Activated T-helper 1 cell treated with anti-CD3 and anti-CD28 coated beads, Interleukin-12 subunit alpha, Interleukin-12 subunit beta, Interleukin-2, Interleukin-4 antibody, amounts not matched to agents 30 ng/mL and 10 ng/mL and 1 ng/mL, durations not matched to agents 14 hours and 24 hours and 36 hours (primary cell): ENCODE measurements at regions of chr16 and their contacts with region 1.

Region 1: DNA sequence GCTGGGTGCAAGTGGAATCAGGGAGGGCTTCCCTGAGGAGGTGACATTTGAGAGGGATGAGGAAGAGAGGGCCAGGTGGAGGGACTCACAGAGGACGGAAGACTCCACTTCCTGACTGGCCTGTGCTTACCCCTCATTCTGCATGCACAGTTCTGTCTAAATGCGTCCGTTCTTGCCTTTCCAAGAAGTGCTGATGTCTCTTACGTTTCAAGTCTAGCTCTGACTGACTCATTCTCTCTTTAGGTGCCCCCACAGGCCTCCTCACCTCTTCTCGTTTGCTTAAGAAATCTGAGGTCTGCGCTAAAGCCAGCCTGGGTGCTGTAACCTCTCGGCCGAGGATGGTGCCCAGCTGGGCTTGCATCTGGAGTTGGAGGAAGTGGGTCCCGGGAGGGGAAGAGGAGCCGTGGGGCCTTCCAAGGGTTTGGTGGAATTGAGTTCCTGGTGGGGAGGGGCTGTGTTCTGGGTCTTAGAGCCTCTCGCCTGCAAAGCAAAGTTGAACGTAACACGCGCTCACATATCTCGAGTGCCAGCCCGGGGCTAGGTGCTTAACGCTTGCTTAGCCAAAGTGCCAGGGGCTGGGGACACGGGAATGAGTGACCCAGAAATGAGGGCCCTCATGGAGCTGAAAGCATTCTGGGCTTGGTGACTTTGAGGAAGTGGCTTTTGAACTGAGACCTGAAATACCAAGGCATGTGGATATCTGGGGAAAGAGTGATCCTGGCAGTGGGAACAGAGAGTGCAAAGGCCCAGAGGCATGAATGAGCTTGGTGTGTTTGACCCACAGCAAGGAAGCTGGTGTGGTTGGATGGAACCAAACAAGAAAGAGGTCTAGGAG is 4.8 kb downstream of the IL4R start:
- DNase-seq: peak; percentile 58
- H3K4me3 Mint-ChIP-seq: peak overlapping the region; percentile 94
- H3K27ac Mint-ChIP-seq: peak overlapping the region; percentile 99
- H3K4me1 Mint-ChIP-seq: peaks cover 71% of the 10 kb centered on the region
- H3K27me3 Mint-ChIP-seq: no peaks in the 10 kb centered on the region

Region 2: GRCh38 chr16:27203429-27204231 is 115.0 kb before region 1 on chr16 and contains the start of gene KDM8:
- intact Hi-C with region 1: loop called (anchors 1 kb)
- DNase-seq: peak; percentile 100
- H3K4me3 Mint-ChIP-seq: peak within 1 kb of the TSS; percentile 97
- H3K27ac Mint-ChIP-seq: peak within 1 kb of the TSS; percentile 99
- H3K4me1 Mint-ChIP-seq: peaks cover 53% of the 10 kb centered on the region
- H3K27me3 Mint-ChIP-seq: no peaks in the 10 kb centered on the region
- total RNA-seq, gene KDM8: 12.5 and 14.5 TPM in 2 replicates

Region 3: GRCh38 chr16:27286451-27286850 is 32.2 kb before region 1 on chr16:
- intact Hi-C with region 1: loop called (anchors 1 kb)
- DNase-seq: no peak
- H3K4me3 Mint-ChIP-seq: no peak overlapping the region
- H3K27ac Mint-ChIP-seq: no peak overlapping the region
- H3K4me1 Mint-ChIP-seq: peaks cover 72% of the 10 kb centered on the region
- H3K27me3 Mint-ChIP-seq: peaks cover 6% of the 10 kb centered on the region

Region 4: DNA sequence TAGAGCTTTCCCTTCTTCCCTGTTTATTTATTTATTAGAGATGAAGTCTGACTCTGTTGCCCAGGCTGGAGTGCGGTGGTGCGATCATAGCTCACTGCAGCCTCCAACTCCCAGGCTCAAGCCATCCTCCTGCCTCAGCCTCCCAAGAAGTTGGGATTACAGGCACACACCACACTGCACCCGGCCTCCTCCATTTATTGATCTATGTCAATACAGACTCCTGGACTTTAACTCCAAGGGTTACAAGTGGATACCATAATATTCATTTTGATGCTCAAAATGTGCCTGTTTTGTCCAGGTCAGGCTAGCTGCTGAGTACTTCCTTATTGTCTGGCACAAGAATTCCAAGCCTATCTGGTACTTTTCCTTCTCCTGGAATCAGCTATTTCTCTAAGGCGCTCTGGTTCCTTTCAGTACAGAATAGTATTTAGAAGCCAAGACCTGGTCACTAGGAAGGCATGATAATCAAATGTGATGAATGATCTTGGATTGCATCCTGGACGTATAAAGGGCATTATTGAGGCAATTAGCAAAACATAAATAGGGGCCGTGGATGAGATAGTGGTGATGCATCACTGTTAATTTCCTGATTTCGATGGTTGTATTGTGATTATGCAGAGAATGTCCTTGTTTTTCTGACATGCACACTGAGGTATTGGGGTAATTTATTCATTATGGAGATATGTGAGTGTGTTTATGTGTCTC is 16.9 kb after region 1 on chr16:
- intact Hi-C with region 1: no loop called
- DNase-seq: no peak
- H3K4me3 Mint-ChIP-seq: no peak overlapping the region
- H3K27ac Mint-ChIP-seq: no peak overlapping the region
- H3K4me1 Mint-ChIP-seq: peaks cover 50% of the 10 kb centered on the region
- H3K27me3 Mint-ChIP-seq: no peaks in the 10 kb centered on the region

Region 5: DNA sequence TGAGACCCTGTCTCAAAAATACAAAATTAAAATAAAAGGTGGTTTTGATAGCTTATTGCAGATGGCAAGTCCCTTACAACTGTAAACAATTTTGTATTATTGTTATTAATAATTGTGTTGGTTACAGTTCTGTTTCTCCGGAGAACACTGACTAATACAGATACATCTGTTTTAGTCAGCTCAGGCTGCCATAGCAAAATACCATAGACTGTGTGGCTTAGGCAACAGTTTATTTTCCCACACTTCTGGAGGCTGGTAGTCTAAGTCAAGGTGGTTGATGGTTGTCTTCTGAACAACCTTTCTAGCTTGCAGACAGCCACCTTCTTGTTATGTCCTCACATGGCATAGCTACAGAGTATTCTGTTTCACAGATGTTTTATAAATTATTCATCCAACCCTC is 69.1 kb after region 1 on chr16:
- intact Hi-C with region 1: no loop called
- DNase-seq: no peak
- H3K4me3 Mint-ChIP-seq: no peak overlapping the region
- H3K27ac Mint-ChIP-seq: peak overlapping the region; percentile 76
- H3K4me1 Mint-ChIP-seq: peaks cover 46% of the 10 kb centered on the region
- H3K27me3 Mint-ChIP-seq: no peaks in the 10 kb centered on the region

Region 6: DNA sequence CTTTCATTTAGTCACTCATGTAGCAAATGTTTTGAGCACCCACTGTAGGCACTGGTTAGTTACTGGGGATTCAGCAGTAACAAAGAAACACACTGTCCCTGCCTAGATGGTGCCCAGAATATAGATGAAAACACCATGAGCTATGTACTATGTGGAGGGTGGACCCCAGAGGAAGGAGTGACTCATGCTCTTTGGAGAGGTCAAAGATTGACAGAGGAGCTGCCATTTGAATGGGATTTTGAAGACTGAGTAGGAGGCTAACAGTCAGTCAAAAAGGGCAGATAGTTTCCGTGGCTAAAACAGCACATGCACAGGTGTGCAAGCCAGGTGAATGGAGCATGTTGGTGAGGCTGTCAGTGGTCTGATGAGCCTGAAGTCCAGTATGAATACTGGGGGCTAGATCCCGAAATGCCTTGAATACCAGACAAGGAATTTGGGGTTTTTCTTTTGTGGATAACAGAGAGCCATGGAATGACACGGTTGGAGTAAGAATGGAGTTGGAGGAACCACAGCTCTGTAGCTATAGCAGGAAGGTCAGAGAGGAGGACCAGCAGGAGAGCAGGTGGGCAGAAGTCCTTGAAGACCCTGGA is 89.5 kb after region 1 on chr16:
- intact Hi-C with region 1: loop called (anchors 1 kb)
- DNase-seq: no peak
- H3K4me3 Mint-ChIP-seq: peak overlapping the region; percentile 100
- H3K27ac Mint-ChIP-seq: peak overlapping the region; percentile 100
- H3K4me1 Mint-ChIP-seq: peaks cover 82% of the 10 kb centered on the region
- H3K27me3 Mint-ChIP-seq: no peaks in the 10 kb centered on the region